ENCODE measurements at regions of chr20 and their contacts with region 1.

Region 1: GRCh38 chr20:3051385-3052019 is 5.7 kb downstream of the MRPS26 start:
- DNase-seq: no peak
- ATAC-seq: no peak

Region 2: DNA sequence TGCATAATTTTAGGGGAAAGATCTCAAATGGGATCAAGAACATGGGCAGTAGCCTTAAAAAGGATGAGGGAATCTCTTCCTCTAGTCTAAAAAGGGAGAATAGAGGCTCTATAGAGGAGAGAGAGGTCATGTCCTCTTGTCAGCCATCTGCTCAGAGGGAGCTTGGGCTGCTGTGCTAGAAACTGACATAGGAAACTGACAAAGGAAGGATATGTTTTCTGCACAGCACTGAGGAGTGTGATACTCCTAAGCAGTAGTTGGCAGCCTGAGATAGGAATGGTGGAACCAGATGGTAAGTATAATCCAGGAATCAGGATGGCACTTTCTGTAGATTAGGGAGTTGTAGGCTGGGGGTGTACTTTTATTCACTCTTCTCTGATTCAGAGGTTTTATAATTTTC is 119.0 kb before region 1 on chr20:
- intact Hi-C with region 1: no loop called
- DNase-seq: no peak
- ATAC-seq: no peak

Region 3: DNA sequence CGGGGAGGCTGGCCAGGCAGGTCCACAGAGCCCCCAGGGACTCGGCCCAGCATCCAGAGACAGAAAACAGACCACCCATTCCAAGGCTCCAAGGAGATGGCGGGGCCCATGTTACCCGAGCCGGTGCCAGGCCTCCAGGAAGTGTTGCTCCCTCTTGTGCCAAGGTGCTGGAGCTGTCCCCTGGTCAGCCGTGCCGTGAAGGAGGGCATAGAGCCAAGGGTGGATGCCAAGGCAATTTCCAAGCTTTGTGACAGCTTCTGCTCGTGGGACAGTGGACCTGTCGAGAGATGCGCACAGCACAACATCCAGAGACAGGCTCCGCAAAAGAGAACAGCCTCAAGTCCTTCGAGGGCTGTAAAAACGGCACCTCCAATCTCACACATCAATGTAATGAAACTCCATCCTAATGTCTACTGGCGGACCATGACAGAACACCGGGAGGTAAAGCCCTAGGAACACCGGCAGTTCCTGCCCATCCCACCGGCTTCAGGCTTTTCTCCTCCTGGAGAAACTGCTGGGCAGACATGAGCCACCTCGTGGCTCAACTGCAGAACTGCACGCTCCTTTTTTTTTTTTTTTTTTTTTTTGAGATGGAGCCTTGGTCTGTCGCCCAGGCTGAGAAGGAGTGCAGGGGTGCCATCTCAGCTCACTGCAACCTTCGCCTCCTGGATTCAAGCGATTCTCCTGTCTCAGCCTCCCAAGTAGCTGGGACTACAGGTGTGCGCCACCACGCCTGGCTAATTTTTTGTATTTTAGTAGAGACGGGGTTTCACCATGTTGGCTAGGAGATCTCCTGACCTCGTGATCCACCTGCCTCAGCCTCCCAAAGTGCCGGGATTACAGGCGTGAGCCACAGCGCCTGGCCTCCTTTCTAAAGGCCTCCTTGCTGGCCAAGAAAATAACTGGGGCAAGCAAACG is 63.9 kb after region 1 on chr20:
- intact Hi-C with region 1: loop called in 1 of 2 experiments (anchors 2 kb)
- DNase-seq: peak; percentile 43
- ATAC-seq: peak; percentile 37 to 39

Region 4: GRCh38 chr20:3312940-3313682 is 261.6 kb after region 1 on chr20:
- intact Hi-C with region 1: loop called in 1 of 2 experiments (anchors 10 kb)
- DNase-seq: no peak
- ATAC-seq: peak; percentile 59 to 78

Measured in left cardiac atrium (tissue), 4 donors.